Activated CD4-positive, alpha-beta memory T cell treated with anti-CD3 and anti-CD28 coated beads for 36 hours (primary cell): ENCODE measurements at regions of chr5 and their contacts with region 1.

Region 1: GRCh38 chr5:95822542-95823181 is at the start of gene GLRX:
- DNase-seq: peak; percentile 61
- H3K4me3 Mint-ChIP-seq: peak within 1 kb of the TSS; percentile 94
- H3K27ac Mint-ChIP-seq: peak within 1 kb of the TSS; percentile 90
- H3K4me1 Mint-ChIP-seq: peaks cover 65% of the 10 kb centered on the region
- H3K27me3 Mint-ChIP-seq: no peaks in the 10 kb centered on the region
- total RNA-seq, gene GLRX: 33.2 to 34.0 TPM

Region 2: DNA sequence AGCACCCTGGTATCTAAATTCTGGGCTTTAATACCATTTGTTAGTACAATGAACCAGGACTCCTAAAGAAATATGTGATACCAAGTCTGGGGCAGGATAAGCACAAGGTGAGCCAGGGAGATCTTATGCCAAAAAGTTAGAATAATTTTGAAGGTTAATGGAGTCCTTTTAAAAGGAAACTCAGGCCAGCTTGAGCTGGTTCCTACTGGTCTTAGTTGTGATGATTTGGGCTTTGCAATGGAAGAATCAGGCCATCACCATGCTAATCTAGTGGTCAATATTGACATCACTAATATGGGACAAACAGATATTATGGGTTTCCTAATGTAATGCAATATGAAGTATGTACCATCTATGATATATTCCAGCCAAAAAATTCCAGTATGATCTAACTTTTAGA is 132.3 kb before region 1 on chr5:
- CTCF ChIA-PET with region 1: no interaction called
- POLR2A ChIA-PET with region 1: no interaction called
- intact Hi-C with region 1: no loop called
- DNase-seq: no peak
- H3K4me3 Mint-ChIP-seq: no peak overlapping the region
- H3K27ac Mint-ChIP-seq: no peak overlapping the region
- H3K4me1 Mint-ChIP-seq: no peaks in the 10 kb centered on the region
- H3K27me3 Mint-ChIP-seq: peaks cover 9% of the 10 kb centered on the region

Region 3: GRCh38 chr5:95835682-95836385 is 13.2 kb after region 1 on chr5:
- CTCF ChIA-PET with region 1: interaction called, 16 read pairs
- POLR2A ChIA-PET with region 1: interaction called, 22 read pairs
- intact Hi-C with region 1: loop called (anchors 1 kb)
- DNase-seq: no peak
- H3K4me3 Mint-ChIP-seq: peak overlapping the region; percentile 75
- H3K27ac Mint-ChIP-seq: peak overlapping the region; percentile 91
- H3K4me1 Mint-ChIP-seq: peaks cover 50% of the 10 kb centered on the region
- H3K27me3 Mint-ChIP-seq: no peaks in the 10 kb centered on the region

Region 4: GRCh38 chr5:96402500-96402899 is 579.8 kb after region 1 on chr5:
- CTCF ChIA-PET with region 1: no interaction called
- POLR2A ChIA-PET with region 1: no interaction called
- intact Hi-C with region 1: no loop called
- DNase-seq: no peak
- H3K4me3 Mint-ChIP-seq: no peak overlapping the region
- H3K27ac Mint-ChIP-seq: no peak overlapping the region
- H3K4me1 Mint-ChIP-seq: no peaks in the 10 kb centered on the region
- H3K27me3 Mint-ChIP-seq: peaks cover 1% of the 10 kb centered on the region